Esophagus squamous epithelium (tissue), 5 donors: ENCODE measurements at regions of chr7 and their contacts with region 1.

Region 1: DNA sequence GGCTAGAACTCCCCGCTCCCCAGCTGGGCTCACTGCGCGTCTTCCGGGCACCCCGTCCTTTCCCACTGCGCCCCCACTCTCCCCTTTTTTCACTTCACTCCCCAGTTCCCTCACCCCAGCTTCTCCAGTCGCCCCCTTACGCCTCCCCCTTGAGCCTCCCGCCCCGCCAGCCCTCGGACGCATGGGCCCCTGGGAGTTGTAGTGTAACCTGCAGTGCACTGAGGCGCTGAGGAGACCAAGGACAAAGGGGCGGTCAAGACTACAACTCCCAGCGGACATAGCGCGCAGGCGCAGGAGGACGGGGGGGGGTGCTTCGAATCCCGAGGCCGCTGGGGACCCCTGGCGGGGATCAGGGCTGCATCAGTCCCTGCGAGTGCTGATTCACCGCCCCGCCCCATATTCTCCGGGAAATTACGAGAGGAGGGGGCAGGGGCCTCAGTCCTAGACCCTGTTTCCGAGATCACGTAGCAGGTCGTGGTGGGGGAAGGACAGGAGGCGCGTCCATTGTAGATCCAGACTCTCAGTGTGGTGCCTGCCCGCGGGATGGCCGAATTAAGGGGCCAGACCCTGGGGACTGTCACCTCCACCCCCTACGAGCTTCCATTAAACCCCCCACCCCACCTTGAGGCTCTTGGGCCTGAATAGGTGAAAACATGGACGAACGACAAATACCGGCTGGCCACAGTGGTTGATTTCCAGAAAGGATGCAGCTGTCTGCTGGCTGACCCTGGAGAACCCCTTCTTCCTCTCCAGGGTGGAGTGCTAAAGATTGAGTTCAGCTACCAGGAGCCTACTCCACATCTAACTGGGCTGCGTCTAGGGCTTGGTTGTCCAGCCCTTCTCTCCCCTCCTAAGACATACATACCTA is 554 bp upstream of the YWHAG start:
- DNase-seq: peak; percentile 97
- H3K4me3 ChIP-seq: peak overlapping the region; percentile 76 to 96 (median 89)
- H3K27ac ChIP-seq: peak overlapping the region; percentile 97 to 100 (median 98)
- H3K4me1 ChIP-seq: peaks cover 14 to 57% (median 41%) of the 10 kb centered on the region in 3 donors
- H3K27me3 ChIP-seq: no peaks in the 10 kb centered on the region
- CTCF ChIP-seq: peak; percentile 47 to 93 (median 78)
- POLR2A ChIP-seq: peak in 1 of 4 donors; percentile 23

Region 2: DNA sequence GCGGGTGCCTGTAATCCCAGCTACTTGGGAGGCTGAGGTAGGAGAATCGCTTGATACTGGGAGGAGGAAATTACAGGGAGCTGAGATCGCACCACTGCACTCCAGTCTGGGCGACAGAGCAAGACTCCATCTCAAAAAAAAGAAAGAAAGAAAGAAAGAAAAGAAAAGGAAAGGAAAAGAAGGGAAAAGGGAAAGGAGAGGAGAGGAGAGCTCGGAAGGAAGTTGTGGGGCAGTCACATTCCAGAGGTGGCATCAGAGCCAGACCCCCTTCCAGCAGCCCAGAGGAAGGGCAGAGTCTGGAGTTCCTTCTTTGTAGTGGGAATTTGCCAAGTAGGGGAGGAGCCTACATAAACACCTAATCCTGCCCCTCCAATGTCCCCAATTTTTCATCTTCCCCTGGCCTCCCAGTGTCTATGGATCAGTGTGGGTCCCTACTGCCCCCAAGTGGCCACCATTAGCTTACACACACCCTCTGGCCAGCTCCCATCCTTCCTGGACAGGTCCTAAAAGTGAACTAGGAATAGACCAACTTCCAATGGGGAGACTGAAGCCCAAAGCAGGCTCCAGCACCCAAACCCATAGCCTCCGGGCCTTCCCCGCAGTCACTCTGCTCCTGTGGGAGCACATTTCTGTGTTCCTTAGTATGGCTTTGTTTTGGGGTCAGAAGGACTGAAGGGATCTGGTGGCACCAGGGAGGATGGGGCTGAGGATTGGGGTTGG is 96.5 kb before region 1 on chr7:
- intact Hi-C with region 1: no loop called
- DNase-seq: no peak
- H3K4me3 ChIP-seq: no peak overlapping the region
- H3K27ac ChIP-seq: no peak overlapping the region
- H3K4me1 ChIP-seq: peaks cover 7 to 22% (median 18%) of the 10 kb centered on the region in 3 donors
- H3K27me3 ChIP-seq: peaks cover 5 to 62% (median 9%) of the 10 kb centered on the region in 4 donors
- CTCF ChIP-seq: peak in 5 of 6 experiments; percentile 49 to 73 (median 52)
- POLR2A ChIP-seq: no peak

Region 3: GRCh38 chr7:76291343-76292212 is 67.8 kb before region 1 on chr7:
- intact Hi-C with region 1: no loop called
- DNase-seq: peak; percentile 36
- H3K4me3 ChIP-seq: peak overlapping the region; percentile 15 to 55 (median 37)
- H3K27ac ChIP-seq: peak overlapping the region; percentile 95 to 99 (median 98)
- H3K4me1 ChIP-seq: peaks cover 44 to 78% (median 63%) of the 10 kb centered on the region in 3 donors
- H3K27me3 ChIP-seq: no peaks in the 10 kb centered on the region
- CTCF ChIP-seq: peak; percentile 95 to 99 (median 98)
- POLR2A ChIP-seq: peak in 1 of 4 donors; percentile 22

Region 4: DNA sequence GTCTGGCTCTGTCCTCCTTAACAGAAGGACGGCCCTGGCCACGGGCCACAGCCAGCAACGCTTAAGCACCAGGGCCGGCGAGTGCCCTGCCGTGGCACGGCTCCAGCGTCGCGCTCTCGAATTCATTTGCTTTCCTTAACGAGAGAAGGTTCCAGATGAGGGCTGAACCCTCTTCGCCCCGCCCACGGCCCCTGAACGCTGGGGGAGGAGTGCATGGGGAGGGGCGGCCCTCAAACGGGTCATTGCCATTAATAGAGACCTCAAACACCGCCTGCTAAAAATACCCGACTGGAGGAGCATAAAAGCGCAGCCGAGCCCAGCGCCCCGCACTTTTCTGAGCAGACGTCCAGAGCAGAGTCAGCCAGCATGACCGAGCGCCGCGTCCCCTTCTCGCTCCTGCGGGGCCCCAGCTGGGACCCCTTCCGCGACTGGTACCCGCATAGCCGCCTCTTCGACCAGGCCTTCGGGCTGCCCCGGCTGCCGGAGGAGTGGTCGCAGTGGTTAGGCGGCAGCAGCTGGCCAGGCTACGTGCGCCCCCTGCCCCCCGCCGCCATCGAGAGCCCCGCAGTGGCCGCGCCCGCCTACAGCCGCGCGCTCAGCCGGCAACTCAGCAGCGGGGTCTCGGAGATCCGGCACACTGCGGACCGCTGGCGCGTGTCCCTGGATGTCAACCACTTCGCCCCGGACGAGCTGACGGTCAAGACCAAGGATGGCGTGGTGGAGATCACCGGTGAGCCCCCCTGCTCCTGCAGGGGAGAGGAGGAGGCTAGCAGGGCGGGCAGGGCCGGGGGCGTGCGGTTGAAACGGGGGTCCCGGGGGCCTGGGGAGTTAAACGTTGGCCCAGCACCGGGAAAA is 56.8 kb before region 1 on chr7 and contains the start of gene HSPB1:
- intact Hi-C with region 1: loop called (anchors 10 kb)
- DNase-seq: peak; percentile 47
- H3K4me3 ChIP-seq: peak within 1 kb of the TSS; percentile 79 to 92 (median 88)
- H3K27ac ChIP-seq: peak within 1 kb of the TSS; percentile 97 to 99 (median 98)
- H3K4me1 ChIP-seq: peaks cover 27 to 88% (median 50%) of the 10 kb centered on the region in 3 donors
- H3K27me3 ChIP-seq: no peaks in the 10 kb centered on the region
- CTCF ChIP-seq: peak in 1 of 6 experiments; percentile 27
- POLR2A ChIP-seq: peak in 3 of 4 donors; percentile 36 to 99 (median 96)
- total RNA-seq, gene HSPB1: 2,415 to 6,888 (median 3,249) TPM

Region 5: GRCh38 chr7:76317782-76318487 is 41.4 kb before region 1 on chr7:
- intact Hi-C with region 1: loop called (anchors 5 kb)
- DNase-seq: peak; percentile 88
- H3K4me3 ChIP-seq: peak overlapping the region; percentile 51 to 77 (median 62)
- H3K27ac ChIP-seq: peak overlapping the region; percentile 90 to 98 (median 95)
- H3K4me1 ChIP-seq: peaks cover 13 to 45% (median 14%) of the 10 kb centered on the region in 3 donors
- H3K27me3 ChIP-seq: no peaks in the 10 kb centered on the region
- CTCF ChIP-seq: no peak
- POLR2A ChIP-seq: peak in 3 of 4 donors; percentile 78 to 92 (median 84)